Transverse colon (tissue), 4 donors: ENCODE measurements at regions of chrX and their contacts with region 1.

Region 1: GRCh38 chrX:71181910-71182799 is 37.5 kb downstream of the NLGN3 start:
- DNase-seq: peak; percentile 88
- H3K4me3 ChIP-seq: peak overlapping the region in 3 of 4 donors; percentile 24 to 51 (median 34)
- H3K27ac ChIP-seq: peak overlapping the region; percentile 75 to 89 (median 86)
- H3K4me1 ChIP-seq: peaks cover 0 to 10% (median 0%) of the 10 kb centered on the region in 4 donors
- H3K27me3 ChIP-seq: no peaks in the 10 kb centered on the region
- CTCF ChIP-seq: no peak
- EP300 ChIP-seq: no peak
- POLR2A ChIP-seq: peak; percentile 75

Region 2: DNA sequence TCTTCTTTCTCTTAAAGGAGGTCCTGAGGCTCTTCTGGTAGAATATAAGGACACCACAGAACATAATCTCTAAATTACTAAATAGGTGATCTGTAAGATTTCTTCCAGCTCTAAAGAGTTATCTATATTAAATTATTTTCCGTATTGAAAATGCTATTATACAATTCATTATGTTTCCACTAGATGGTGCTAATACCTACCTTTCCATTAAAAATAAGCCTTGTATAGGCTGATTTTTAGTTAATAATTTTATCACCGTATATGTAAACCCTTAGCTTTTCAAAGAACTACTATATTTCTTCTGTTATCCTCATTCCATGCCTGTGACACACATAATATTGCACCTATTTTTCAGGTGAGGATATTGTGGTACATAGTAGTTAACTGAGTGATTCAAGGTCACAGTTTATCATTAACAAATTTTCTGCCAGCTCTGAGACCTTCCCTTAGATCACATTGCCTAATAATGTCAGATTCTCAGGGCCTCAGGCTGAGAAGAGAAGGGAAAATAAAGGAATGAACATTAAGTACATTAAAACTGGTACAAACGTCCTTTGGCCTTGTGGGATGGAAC is 412.4 kb before region 1 on chrX:
- in situ Hi-C with region 1: loop called in 2 of 4 experiments (anchors 10 to 25 kb)
- intact Hi-C with region 1: no loop called
- DNase-seq: no peak
- H3K4me3 ChIP-seq: no peak overlapping the region
- H3K27ac ChIP-seq: no peak overlapping the region
- H3K4me1 ChIP-seq: no peaks in the 10 kb centered on the region
- H3K27me3 ChIP-seq: no peaks in the 10 kb centered on the region
- CTCF ChIP-seq: peak in 4 of 5 experiments; percentile 30 to 44 (median 34)
- EP300 ChIP-seq: no peak
- POLR2A ChIP-seq: no peak

Region 3: DNA sequence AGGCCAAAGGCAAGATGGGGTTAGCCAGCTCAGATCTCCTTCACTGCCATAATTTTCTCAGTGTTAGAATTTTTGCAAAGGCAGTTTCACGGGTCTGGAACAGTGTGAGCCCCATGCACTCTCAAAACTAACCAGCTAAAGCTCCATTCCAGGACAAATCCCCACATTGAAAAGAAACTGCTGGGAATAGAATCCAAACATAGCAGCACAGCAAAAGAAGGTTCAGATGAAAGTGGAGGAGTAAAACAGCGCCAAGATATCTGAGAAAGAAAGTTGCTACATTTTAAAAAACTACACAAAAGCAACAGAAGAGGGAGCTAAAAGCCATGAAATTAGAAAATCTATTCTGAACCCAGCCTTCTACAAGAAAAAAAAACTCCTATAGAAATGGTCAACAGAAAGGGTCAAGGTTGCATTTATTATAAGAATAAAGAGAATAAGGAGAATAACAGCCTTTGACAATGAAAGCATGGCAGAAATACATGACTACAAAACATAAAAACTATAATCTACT is 211.6 kb before region 1 on chrX:
- in situ Hi-C with region 1: loop called in 1 of 4 experiments (anchors 25 kb)
- intact Hi-C with region 1: loop called (anchors 10 kb)
- DNase-seq: no peak
- H3K4me3 ChIP-seq: no peak overlapping the region
- H3K27ac ChIP-seq: no peak overlapping the region
- H3K4me1 ChIP-seq: no peaks in the 10 kb centered on the region
- H3K27me3 ChIP-seq: no peaks in the 10 kb centered on the region
- CTCF ChIP-seq: peak in 4 of 5 experiments; percentile 10 to 38 (median 22)
- EP300 ChIP-seq: no peak
- POLR2A ChIP-seq: no peak

Region 4: GRCh38 chrX:70998411-70999027 is 183.6 kb before region 1 on chrX:
- in situ Hi-C with region 1: loop called in 1 of 4 experiments (anchors 10 kb)
- intact Hi-C with region 1: no loop called
- DNase-seq: no peak
- H3K4me3 ChIP-seq: no peak overlapping the region
- H3K27ac ChIP-seq: no peak overlapping the region
- H3K4me1 ChIP-seq: no peaks in the 10 kb centered on the region
- H3K27me3 ChIP-seq: no peaks in the 10 kb centered on the region
- CTCF ChIP-seq: no peak
- EP300 ChIP-seq: no peak
- POLR2A ChIP-seq: no peak

Region 5: DNA sequence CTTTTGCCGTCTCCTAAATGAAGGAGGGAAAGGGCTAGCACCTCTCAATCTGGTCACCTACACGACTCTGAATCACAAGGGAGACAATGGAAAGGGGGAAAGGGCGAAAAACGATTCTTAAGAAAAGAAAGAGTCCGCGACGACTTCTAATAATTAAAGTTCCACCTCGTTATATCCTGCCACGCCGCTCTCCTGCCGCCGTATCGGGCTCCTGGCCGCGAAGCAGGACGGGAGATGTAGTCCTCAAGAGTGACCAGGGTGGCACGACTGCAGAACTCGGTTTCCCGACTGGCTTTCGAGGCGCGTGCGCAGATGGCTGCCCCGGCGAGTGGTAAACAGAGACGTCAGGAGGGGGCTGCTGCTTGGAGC is 86.6 kb before region 1 on chrX and contains the start of gene FOXO4:
- in situ Hi-C with region 1: loop called in 1 of 4 experiments (anchors 25 kb)
- intact Hi-C with region 1: no loop called
- DNase-seq: peak; percentile 93
- H3K4me3 ChIP-seq: peak within 1 kb of the TSS; percentile 49 to 67 (median 56)
- H3K27ac ChIP-seq: peak within 1 kb of the TSS; percentile 66 to 83 (median 79)
- H3K4me1 ChIP-seq: peaks cover 7 to 23% (median 10%) of the 10 kb centered on the region in 4 donors
- H3K27me3 ChIP-seq: no peaks in the 10 kb centered on the region
- CTCF ChIP-seq: no peak
- EP300 ChIP-seq: no peak
- POLR2A ChIP-seq: no peak
- total RNA-seq, gene FOXO4: 23.3 to 152 (median 35.4) TPM

Region 6: GRCh38 chrX:71127146-71127545 is 55.0 kb before region 1 on chrX:
- in situ Hi-C with region 1: no loop called
- intact Hi-C with region 1: loop called (anchors 2 kb)
- DNase-seq: no peak
- H3K4me3 ChIP-seq: no peak overlapping the region
- H3K27ac ChIP-seq: no peak overlapping the region
- H3K4me1 ChIP-seq: peaks cover 0 to 4% (median 0%) of the 10 kb centered on the region in 4 donors
- H3K27me3 ChIP-seq: no peaks in the 10 kb centered on the region
- CTCF ChIP-seq: no peak
- EP300 ChIP-seq: no peak
- POLR2A ChIP-seq: no peak